ENCODE measurements at regions of chr1 and their contacts with region 1.

Region 1: DNA sequence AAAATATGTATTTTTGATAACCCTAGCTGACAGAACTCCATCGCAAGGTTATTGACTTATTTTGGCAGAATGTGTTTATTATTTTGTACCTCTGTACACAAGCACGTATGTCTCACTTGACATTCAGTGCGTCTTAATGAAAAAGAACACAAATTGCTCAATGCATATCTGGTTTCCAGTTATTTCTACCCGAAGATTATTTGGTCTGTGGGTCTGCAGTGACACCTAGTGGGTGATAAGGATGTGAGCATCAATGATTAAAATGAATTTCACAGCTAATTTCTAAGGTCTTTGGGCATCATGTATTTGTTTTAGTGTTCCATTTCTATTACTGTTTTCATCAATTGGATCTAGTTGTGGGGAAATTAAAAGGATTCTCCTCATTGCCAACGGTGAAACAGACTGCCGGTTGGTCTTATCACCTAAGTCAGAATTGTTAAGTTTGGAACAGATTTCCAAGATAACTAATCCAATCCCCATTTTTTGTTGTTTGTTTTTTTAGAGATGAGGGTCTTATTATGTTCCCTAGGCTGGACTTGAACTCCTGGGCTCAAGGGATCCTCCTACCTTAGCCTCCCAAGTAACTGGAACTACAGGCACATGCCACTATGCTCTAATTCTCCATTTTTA is 13.9 kb downstream of the DDX20 start:
- DNase-seq: peak; percentile 17
- H3K4me3 Mint-ChIP-seq: no peak overlapping the region
- H3K27ac Mint-ChIP-seq: no peak overlapping the region
- H3K4me1 Mint-ChIP-seq: no peaks in the 10 kb centered on the region
- H3K27me3 Mint-ChIP-seq: no peaks in the 10 kb centered on the region
- CTCF ChIP-seq: peak; percentile 38

Region 2: GRCh38 chr1:111720274-111720976 is 49.2 kb before region 1 on chr1:
- CTCF ChIA-PET with region 1: no interaction called
- intact Hi-C with region 1: loop called (anchors 1 kb)
- DNase-seq: no peak
- H3K4me3 Mint-ChIP-seq: no peak overlapping the region
- H3K27ac Mint-ChIP-seq: no peak overlapping the region
- H3K4me1 Mint-ChIP-seq: peaks cover 11% of the 10 kb centered on the region
- H3K27me3 Mint-ChIP-seq: peaks cover 42% of the 10 kb centered on the region
- CTCF ChIP-seq: no peak

Measured in Calu3 (cell line).